Left ventricle myocardium inferior (tissue), 1 donor: ENCODE measurements at regions of chr14 and their contacts with region 1.

Region 1: DNA sequence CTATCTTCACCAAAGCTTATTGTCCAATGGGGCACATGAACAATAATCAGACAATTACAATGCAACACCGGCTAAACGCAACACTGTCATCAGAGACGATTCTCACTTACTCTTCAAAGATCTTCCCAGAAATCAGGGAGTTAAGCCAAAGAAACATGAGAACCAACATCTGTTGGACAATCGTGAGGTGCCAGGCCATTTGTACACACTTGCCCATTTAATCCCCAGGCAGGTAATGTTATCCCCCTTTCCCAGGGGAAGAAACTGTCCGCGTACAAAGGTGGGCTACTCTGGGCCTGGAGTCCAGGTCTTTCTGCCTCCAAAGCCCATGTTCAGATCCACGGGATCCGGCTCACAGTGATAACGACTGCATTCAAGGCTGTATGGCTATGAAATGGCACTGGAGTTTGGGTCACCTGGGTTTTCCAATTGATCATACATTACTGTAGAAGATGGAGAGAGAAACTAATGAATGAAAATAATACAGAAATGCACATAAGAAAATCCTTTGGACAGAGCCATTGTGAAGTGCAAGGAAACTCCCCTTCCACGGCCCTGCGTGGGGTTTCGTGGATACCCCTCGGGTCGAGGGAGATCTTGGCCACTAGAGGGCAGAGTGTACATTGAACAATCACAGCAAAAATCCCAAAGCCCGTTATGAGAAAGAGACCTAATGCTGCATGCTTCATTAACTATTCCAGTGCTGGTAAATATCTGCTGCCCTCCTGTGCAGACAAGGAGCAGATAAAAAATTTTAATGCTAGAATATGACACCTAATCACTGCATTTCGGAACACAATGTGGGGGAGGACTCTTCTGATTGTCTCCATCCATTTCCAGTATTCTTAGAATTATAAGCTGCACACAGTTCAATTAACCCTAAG is 111.4 kb downstream of the EGLN3 start:
- DNase-seq: no peak
- H3K4me3 ChIP-seq: no peak overlapping the region
- H3K27ac ChIP-seq: no peak overlapping the region
- H3K4me1 ChIP-seq: peaks cover 14% of the 10 kb centered on the region
- H3K27me3 ChIP-seq: no peaks in the 10 kb centered on the region
- CTCF ChIP-seq: peak; percentile 87

Region 2: DNA sequence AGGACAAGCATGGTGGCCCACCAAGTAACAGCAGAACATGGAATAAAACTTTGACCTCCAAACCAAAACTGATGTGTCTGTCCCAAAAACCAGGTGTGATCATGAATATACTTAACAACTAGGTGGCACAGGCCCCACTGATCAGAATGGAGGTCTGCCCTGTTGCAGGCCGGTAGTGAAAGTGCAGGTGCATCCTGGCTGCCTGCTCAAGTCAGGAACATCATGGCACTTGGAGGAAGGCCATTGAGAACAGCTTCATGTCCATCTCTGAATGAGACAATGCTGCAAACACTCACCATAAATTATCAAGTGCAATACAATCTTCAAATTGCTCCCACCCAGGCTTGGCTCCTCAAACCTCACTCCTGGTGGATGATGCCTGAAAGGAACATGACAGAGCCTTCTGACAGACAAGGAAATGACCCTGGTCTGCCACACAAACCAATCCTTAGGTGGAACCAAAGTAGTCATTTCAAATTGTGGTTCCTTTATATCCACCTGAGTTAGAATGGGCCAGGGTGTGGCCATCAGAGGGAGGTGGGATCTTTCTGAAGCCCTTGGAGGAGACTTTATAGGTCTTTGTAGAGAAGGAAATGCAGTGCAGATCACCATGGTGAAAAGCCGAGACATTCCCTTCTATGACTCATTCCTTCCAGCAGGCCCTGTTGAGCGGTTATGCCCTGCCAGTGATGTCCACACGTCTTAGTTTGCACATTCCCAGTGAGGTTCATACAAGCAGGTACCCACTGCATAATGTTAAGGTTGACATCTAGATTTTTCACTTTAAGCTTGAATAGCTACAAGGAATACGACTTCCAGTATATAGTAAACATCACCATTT is 75.5 kb after region 1 on chr14:
- intact Hi-C with region 1: no loop called
- DNase-seq: no peak
- H3K4me3 ChIP-seq: no peak overlapping the region
- H3K27ac ChIP-seq: no peak overlapping the region
- H3K4me1 ChIP-seq: peaks cover 27% of the 10 kb centered on the region
- H3K27me3 ChIP-seq: no peaks in the 10 kb centered on the region
- CTCF ChIP-seq: no peak

Region 3: GRCh38 chr14:34104489-34105397 is 265.3 kb after region 1 on chr14:
- intact Hi-C with region 1: loop called (anchors 5 kb)
- DNase-seq: no peak
- H3K4me3 ChIP-seq: no peak overlapping the region
- H3K27ac ChIP-seq: no peak overlapping the region
- H3K4me1 ChIP-seq: peaks cover 21% of the 10 kb centered on the region
- H3K27me3 ChIP-seq: no peaks in the 10 kb centered on the region
- CTCF ChIP-seq: no peak

Region 4: GRCh38 chr14:34227834-34228649 is 388.6 kb after region 1 on chr14:
- intact Hi-C with region 1: loop called (anchors 2 kb)
- DNase-seq: peak; percentile 41
- H3K4me3 ChIP-seq: peak overlapping the region; percentile 48
- H3K27ac ChIP-seq: no peak overlapping the region
- H3K4me1 ChIP-seq: peaks cover 20% of the 10 kb centered on the region
- H3K27me3 ChIP-seq: no peaks in the 10 kb centered on the region
- CTCF ChIP-seq: peak; percentile 87

Region 5: DNA sequence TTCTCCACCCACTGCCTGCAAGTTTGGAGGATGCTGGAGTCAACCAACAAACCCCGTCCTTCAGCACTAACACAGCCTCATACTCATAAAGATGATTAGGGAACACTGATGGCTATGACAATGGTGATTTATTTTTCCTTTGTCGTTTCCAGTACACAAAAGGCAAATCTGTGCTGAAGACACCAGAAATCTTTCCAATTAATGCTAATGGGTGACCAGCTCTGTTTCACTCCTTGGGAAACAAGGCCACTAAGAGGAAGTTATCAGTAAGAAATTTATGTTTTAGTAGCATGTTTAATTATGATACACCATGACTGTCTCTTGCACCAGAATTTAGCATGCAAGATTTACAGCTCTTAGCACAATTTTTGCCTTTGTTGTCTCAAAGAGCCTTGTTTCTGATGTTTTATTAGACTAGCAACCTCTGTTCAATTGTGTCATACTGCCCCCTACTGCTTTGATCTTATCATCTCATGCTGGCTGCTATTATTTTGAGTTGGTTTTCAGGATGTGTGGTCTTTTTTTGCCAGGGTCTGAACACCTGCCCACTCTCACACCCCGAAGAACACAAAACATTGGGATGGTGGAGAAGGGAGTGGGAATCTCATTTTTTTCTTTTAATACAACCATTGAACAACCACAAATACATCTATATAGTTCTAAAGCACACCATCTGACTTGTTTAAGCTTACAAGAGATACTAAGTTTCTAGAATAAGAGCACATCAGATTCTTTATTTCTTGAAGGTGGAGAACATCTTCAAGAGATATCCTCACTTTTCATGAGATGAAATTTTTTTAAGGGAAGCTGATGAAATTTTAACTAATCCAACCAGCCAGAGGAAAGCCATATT is 461.7 kb after region 1 on chr14:
- intact Hi-C with region 1: loop called (anchors 5 kb)
- DNase-seq: no peak
- H3K4me3 ChIP-seq: no peak overlapping the region
- H3K27ac ChIP-seq: no peak overlapping the region
- H3K4me1 ChIP-seq: peaks cover 6% of the 10 kb centered on the region
- H3K27me3 ChIP-seq: no peaks in the 10 kb centered on the region
- CTCF ChIP-seq: peak; percentile 73